Activated naive CD8-positive, alpha-beta T cell treated with anti-CD3 and anti-CD28 coated beads, Interleukin-2, amount 10 ng/mL, durations not matched to agents 7 days and 5 days (primary cell): ENCODE measurements at regions of chrX and their contacts with region 1.

Region 1: DNA sequence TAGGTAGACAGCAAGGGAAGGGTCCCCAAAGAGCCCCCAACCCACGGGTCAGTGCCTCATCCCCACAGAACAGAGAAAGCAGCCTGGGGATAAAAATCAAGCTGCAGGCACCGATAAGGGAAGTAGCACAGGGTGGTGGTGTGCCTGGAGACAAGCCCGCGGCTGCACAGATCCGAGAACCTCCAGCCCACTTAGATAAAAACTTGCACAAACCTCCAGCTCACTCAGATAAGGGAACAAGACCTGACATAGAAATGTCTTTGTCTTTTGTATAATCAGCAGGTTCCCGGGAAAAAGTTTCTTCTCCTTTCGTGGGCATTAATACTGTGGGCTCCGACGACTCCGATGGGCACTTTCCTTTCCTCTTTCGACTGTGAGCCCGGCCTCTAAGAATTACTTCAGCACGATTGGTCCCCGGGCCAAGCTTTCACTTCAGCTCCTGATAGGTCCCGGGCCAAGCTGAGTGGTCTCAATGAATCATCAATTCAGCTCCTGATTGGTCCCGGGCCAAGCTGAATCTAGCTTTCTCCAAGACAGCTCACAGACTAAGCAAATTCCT is 32.4 kb downstream of the PRDX4 start:
- DNase-seq: peak; percentile 29
- ATAC-seq: peak; percentile 81
- H3K4me3 Mint-ChIP-seq: peak overlapping the region; percentile 70
- H3K27ac Mint-ChIP-seq: peak overlapping the region; percentile 64
- H3K4me1 Mint-ChIP-seq: peaks cover 2% of the 10 kb centered on the region
- H3K27me3 Mint-ChIP-seq: no peaks in the 10 kb centered on the region

Region 2: DNA sequence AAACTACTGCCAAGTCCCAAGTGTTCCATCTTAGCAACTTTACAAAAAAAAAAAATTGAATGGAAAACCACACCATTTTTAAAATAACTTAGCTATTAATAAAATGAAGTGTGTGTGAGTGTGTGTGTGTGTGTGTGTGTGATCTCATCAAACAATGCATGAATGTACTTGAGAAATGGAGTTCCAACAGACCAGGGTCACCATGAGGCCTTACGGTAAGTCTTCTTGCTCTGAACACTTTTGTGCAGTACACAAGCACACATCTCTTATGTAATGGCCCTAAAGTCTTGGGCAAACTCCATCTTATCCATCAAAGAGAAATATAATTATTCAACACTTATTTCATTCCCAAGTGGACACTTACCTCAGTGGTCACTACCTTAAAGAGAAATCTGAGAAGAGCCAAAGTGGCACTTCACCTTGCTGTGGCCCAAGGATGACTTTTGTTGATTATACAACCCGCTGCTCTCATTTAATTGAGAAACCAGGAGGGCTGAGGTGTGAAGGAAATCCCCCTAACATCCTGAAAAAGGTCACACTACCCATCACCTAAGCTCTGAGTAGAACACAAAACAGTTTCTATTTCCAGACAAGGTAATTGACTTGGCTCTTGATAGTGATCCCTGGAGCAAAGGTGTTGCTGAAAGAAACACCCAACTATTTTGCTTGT is 128.9 kb before region 1 on chrX:
- POLR2A ChIA-PET with region 1: no interaction called
- DNase-seq: no peak
- ATAC-seq: no peak
- H3K4me3 Mint-ChIP-seq: no peak overlapping the region
- H3K27ac Mint-ChIP-seq: no peak overlapping the region
- H3K4me1 Mint-ChIP-seq: no peaks in the 10 kb centered on the region
- H3K27me3 Mint-ChIP-seq: peaks cover 2% of the 10 kb centered on the region

Region 3: GRCh38 chrX:23901805-23902204 is 202.1 kb after region 1 on chrX:
- POLR2A ChIA-PET with region 1: interaction called, 11 read pairs
- DNase-seq: no peak
- ATAC-seq: peak; percentile 91
- H3K4me3 Mint-ChIP-seq: no peak overlapping the region
- H3K27ac Mint-ChIP-seq: no peak overlapping the region
- H3K4me1 Mint-ChIP-seq: peaks cover 8% of the 10 kb centered on the region
- H3K27me3 Mint-ChIP-seq: no peaks in the 10 kb centered on the region